ENCODE measurements at regions of chr15 and their contacts with region 1.

Region 1: DNA sequence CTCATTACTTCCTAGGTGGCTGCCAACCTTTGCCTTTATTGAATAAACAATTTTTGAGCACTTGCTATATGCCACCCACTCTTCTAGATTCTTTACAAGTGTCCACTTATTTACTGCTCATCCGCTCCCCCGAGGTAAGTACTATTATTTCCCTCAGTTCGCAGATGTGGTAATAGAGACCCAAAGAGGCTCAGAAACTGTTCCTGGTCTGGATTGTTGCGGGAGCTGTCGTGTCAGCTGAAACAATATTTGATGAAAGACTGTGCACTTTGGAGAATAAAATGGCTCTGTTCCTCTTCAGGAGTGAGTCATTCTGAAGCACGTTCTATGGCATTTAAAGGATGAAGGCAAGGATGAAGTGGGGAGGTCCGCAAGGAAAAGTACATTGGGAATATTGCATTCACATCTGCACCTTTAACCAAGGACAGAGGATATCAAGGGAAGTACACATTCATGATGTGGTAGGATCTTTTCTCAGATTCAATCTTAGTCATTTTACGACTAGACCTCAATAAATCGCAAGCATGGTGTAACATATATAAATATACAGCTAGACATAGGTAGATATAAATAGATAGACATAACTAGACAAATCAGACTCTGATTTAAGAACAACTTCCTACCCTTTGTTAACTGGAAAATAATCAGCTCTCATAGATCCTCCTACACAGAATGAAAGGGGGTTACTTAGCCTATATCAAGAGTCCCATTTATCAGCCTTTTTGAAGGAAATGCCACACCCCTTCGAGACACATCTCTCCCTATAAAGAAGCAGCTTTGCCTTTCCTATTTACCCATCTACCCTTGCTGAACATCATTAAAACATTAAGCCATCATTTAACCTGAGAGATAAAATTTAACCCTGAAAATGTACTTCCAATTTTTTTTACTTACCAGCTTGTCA is 70.3 kb downstream of the RORA start:
- DNase-seq: no peak
- ATAC-seq: no peak
- H3K4me3 ChIP-seq: no peak overlapping the region
- H3K4me3 Mint-ChIP-seq: no peak overlapping the region
- H3K27ac ChIP-seq: no peak overlapping the region
- H3K27ac Mint-ChIP-seq: no peak overlapping the region
- H3K4me1 ChIP-seq: no peaks in the 10 kb centered on the region
- H3K4me1 Mint-ChIP-seq: no peaks in the 10 kb centered on the region
- H3K27me3 ChIP-seq: peaks cover 0 to 3% (median 0%) of the 10 kb centered on the region in 4 experiments
- H3K27me3 Mint-ChIP-seq: peaks cover 32% of the 10 kb centered on the region
- CTCF ChIP-seq: no peak

Region 2: DNA sequence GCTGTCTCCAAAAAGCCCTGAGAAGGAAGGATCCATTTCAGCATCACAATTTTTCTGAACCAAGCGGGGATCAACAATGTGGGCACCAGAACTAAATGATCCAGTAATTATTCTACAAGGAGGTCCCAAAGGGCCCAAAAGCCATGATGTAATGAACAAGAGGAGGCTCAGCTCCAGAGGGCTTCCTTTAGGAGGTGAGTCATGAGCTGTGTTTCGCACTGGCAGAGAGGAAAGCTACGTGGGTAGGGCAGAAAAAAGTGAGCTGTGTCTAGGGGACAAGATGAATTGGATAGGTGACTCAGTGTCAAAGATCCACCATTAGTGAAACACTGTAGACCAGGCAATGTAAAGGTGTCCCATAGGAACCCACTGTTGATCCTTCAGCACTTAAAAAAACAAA is 43.1 kb before region 1 on chr15:
- CTCF ChIA-PET with region 1: no interaction called
- POLR2A ChIA-PET with region 1: no interaction called
- intact Hi-C with region 1: loop called (anchors 1 kb)
- DNase-seq: no peak
- ATAC-seq: no peak
- H3K4me3 ChIP-seq: no peak overlapping the region
- H3K4me3 Mint-ChIP-seq: no peak overlapping the region
- H3K27ac ChIP-seq: no peak overlapping the region
- H3K27ac Mint-ChIP-seq: no peak overlapping the region
- H3K4me1 ChIP-seq: no peaks in the 10 kb centered on the region
- H3K4me1 Mint-ChIP-seq: no peaks in the 10 kb centered on the region
- H3K27me3 ChIP-seq: no peaks in the 10 kb centered on the region
- H3K27me3 Mint-ChIP-seq: peaks cover 16% of the 10 kb centered on the region
- CTCF ChIP-seq: no peak

Measured in B cell (primary cell).